ENCODE measurements at regions of chr1 and their contacts with region 1.

Region 1: DNA sequence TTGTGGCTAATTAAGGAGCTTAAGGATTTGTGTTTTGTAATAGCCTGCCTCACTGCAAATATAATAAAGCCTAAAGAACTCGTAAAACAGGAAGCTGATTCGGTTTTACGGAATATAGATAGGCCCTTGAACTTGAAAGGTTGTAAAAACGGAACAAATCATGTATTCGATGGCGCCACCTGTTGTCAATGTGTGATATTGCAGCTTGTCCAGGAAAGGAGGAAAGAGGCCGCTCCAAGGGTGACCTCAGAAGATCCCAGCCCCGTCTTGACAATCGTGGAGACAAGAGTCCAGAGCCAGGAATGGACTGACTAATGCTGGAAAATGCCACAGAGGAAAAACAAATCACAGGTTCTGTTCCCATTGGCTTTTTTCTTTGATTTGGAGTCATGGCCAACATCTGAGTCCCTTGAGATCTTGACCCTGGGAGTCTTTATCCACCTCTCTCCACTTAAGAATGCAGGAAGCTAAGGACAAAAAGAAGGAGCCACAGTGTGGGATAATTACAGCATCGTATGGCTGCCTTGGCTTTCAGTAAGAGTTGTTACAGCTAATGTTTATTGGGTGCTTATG is 7.0 kb upstream of the IGSF21 start:
- DNase-seq: peak in 2 of 3 donors; percentile 69 to 87
- ATAC-seq: peak; percentile 93
- H3K4me3 ChIP-seq: no peak overlapping the region
- H3K4me1 ChIP-seq: peaks cover 4% of the 10 kb centered on the region
- CTCF ChIP-seq: peak; percentile 55

Region 2: DNA sequence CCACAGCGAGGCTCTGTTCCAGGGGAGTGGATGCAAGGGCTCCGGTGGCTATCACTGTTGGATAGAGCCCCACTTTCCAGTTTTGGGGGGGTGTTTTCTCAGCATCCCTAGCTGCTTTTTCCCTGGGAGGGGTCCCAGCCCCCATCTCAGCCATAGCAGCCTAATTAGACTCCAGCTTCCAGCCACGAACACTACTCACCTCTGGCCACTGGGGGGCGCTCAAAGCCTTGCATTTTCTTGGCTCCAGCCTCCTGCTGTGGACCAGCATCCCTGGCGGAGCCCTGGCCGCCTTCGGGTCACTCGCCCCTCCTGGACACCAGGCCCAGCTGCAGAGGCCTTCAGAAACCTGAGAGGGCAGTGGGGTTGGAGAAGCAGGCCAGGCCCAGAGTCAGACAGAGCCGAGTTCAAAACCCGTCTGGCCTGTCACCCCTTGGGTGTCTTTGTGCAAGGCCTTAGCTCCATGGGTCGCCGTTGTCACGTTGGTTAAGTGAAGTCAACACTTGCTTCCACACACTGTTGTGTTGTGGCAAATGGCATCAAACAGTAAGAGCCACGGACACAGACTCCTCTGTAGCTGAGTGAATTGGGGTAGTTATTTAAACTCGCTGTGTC is 438.9 kb before region 1 on chr1:
- intact Hi-C with region 1: loop called in 1 of 2 experiments (anchors 5 kb)
- DNase-seq: peak in 2 of 3 donors; percentile 51 to 67
- ATAC-seq: peak; percentile 58
- H3K4me3 ChIP-seq: no peak overlapping the region
- H3K4me1 ChIP-seq: no peaks in the 10 kb centered on the region
- CTCF ChIP-seq: no peak

Region 3: DNA sequence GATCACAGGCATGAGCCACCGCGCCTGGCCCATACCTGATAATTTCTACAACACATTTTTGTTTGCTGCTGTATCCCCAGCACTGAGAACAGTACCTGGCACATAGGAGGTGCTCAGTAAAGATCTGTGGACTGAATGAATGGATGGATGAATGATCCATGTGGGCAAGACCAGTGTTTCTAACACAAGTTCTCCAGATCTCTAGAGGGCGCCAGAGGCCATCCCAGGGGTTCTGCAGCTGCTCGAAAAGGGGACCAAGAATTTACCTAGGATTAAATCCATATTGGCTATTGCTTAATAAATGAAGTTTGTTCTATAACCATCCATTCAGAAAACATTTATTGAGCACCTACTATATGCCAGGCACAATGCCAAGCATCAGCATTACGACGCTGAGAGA is 177.7 kb before region 1 on chr1:
- intact Hi-C with region 1: loop called in 1 of 2 experiments (anchors 10 kb)
- DNase-seq: peak in 2 of 3 donors; percentile 57 to 76
- ATAC-seq: peak; percentile 40
- H3K4me3 ChIP-seq: no peak overlapping the region
- H3K4me1 ChIP-seq: no peaks in the 10 kb centered on the region
- CTCF ChIP-seq: peak; percentile 16

Measured in mucosa of descending colon (tissue), 3 donors.